ENCODE measurements at regions of chr3 and their contacts with region 1.

Region 1: DNA sequence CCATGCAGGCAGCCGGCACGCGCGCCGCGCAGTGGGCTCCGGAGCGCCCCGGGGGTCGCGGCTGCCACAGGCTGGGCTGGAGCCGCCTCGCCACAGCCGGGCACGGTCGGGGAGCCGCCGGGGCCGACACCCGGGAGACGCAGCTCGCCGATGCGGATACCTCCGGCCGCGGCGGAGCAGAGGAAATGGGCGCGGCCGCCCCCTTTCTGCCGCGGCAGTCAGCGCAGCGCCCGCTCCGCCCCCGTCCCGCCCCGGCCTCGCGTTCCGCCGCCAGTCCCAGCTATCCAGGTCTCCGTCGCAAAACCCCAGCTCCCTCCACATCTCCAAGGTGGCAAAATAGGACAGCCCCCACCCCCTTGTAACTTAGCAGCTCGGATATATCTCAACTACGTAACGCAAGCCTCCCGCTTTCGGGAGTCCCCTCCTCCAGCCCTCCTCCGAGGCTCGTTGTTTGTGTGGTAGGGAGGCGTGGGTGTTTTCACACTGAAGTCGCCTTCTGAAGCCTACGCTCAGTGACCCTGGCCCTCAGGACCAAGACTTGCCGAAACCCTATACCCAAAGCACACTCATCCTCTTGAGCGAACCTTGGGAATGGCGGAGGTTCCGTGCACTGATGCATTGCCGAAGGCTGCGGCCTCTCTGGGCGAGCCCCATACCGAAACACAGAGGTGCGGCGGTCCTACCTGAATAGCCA is at the start of gene SH3BP5:
- DNase-seq: peak; percentile 63 to 79 (median 69)
- H3K4me3 ChIP-seq: peak within 1 kb of the TSS; percentile 92
- H3K4me3 Mint-ChIP-seq: peak within 1 kb of the TSS; percentile 91 to 97 (median 95)
- H3K27ac ChIP-seq: peak within 1 kb of the TSS; percentile 75
- H3K27ac Mint-ChIP-seq: peak within 1 kb of the TSS; percentile 70 to 95 (median 90)
- H3K4me1 ChIP-seq: peaks cover 55% of the 10 kb centered on the region
- H3K4me1 Mint-ChIP-seq: peaks cover 49 to 58% (median 55%) of the 10 kb centered on the region in 3 donors
- H3K27me3 ChIP-seq: no peaks in the 10 kb centered on the region
- H3K27me3 Mint-ChIP-seq: no peaks in the 10 kb centered on the region
- total RNA-seq, gene SH3BP5: 14.2 to 15.5 TPM

Region 2: DNA sequence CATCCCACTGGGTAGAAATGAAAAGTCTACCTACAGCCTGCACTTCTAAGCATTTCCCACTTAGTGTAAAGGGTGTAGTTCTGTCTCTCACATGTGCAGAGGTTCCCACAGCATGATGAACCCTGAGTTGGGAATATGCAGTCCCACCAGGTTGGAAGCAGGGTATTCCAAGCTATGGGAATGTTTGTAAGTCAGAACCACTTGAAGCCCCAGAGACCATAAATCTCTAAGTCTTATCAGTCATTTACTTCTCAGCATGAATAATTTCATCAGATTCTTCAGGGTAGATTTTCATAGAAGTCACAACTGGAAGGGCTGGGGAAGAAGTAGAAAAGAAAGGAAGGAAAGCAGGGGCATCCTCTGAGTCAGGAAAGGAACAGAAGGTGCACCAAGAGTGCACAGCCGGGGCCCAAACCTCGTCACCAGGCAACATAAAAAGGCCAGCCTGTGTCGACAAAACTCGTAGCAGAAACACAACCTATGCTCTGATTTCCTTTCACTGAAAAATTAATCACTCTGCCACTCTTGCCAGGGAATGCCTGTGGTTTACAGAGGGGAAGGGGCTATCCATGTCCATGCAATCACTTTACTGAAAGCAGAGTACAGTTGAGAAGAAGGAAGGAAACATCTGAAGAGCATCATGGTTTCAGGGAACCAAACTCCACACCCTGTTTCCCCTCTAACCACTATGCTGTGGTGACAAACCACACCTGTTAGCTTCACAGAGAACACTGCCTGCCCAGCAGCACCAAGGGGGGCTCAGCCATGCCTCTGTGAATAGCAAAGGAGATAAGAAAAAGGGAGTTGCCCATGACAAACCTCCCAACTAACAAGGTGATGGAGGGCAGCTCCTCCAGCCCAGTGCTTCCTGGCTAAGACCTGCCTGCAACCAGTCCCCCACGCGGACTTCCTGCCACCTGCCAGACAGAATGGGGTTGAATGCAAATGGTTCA is 40.7 kb before region 1 on chr3:
- CTCF ChIA-PET with region 1: interaction called, 16 read pairs
- POLR2A ChIA-PET with region 1: no interaction called
- DNase-seq: peak; percentile 59 to 87 (median 79)
- H3K4me3 ChIP-seq: peak overlapping the region; percentile 32
- H3K4me3 Mint-ChIP-seq: peak overlapping the region; percentile 37 to 91 (median 84)
- H3K27ac ChIP-seq: peak overlapping the region; percentile 43
- H3K27ac Mint-ChIP-seq: peak overlapping the region; percentile 87 to 98 (median 94)
- H3K4me1 ChIP-seq: peaks cover 92% of the 10 kb centered on the region
- H3K4me1 Mint-ChIP-seq: peaks cover 86 to 98% (median 95%) of the 10 kb centered on the region in 3 donors
- H3K27me3 ChIP-seq: no peaks in the 10 kb centered on the region
- H3K27me3 Mint-ChIP-seq: no peaks in the 10 kb centered on the region

Region 3: GRCh38 chr3:15309662-15310335 is 22.8 kb before region 1 on chr3:
- CTCF ChIA-PET with region 1: interaction called, 16 read pairs
- POLR2A ChIA-PET with region 1: interaction called, 4 read pairs
- DNase-seq: peak in 1 of 5 donors; percentile 42
- H3K4me3 ChIP-seq: no peak overlapping the region
- H3K4me3 Mint-ChIP-seq: peak overlapping the region in 6 of 7 donors; percentile 38 to 56 (median 46)
- H3K27ac ChIP-seq: peak overlapping the region; percentile 55
- H3K27ac Mint-ChIP-seq: peak overlapping the region; percentile 63 to 95 (median 82)
- H3K4me1 ChIP-seq: peaks cover 78% of the 10 kb centered on the region
- H3K4me1 Mint-ChIP-seq: peaks cover 59 to 76% (median 76%) of the 10 kb centered on the region in 3 donors
- H3K27me3 ChIP-seq: no peaks in the 10 kb centered on the region
- H3K27me3 Mint-ChIP-seq: no peaks in the 10 kb centered on the region

Region 4: DNA sequence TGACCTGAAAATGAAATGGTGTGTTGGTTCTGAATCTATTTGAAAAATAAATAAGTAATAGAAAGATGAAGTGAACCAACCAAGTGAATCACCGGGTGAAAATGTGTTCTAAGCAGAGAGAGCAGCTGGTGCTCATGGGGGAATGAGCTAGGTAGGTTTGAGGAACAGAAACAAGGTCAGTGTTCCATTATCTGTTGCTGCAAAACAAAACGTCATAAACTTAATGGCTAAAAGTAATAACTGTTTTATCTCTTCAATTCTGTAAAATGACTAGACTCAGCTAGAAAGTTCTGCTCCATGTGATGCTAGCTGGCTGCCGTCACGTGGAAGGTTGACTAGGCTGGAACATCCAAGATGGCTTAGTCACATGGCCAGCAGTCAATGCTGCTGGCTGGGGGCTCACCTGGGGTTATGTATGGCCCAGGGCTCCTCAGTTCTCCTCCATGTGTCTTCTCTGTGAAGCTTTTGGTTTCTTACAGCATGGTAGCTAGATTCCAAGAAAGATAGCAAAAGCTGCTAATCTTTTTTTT is 13.1 kb after region 1 on chr3:
- CTCF ChIA-PET with region 1: interaction called, 13 read pairs
- POLR2A ChIA-PET with region 1: interaction called, 7 read pairs
- DNase-seq: no peak
- H3K4me3 ChIP-seq: no peak overlapping the region
- H3K4me3 Mint-ChIP-seq: peak overlapping the region in 1 of 7 donors; percentile 26
- H3K27ac ChIP-seq: no peak overlapping the region
- H3K27ac Mint-ChIP-seq: peak overlapping the region in 5 of 8 donors; percentile 12 to 34 (median 28)
- H3K4me1 ChIP-seq: peaks cover 43% of the 10 kb centered on the region
- H3K4me1 Mint-ChIP-seq: peaks cover 48 to 59% (median 51%) of the 10 kb centered on the region in 3 donors
- H3K27me3 ChIP-seq: no peaks in the 10 kb centered on the region
- H3K27me3 Mint-ChIP-seq: no peaks in the 10 kb centered on the region

Measured in CD8-positive, alpha-beta memory T cell (primary cell).